Activated T-helper 2 cell treated with anti-CD3 and anti-CD28 coated beads, Interferon-gamma antibody, Interleukin-2, Interleukin-4, amounts not matched to agents 10 μg/mL and 5 μg/mL and 100 μg/mL, durations not matched to agents 14 hours and 24 hours and 36 hours (primary cell): ENCODE measurements at regions of chr3 and their contacts with region 1.

Region 1: GRCh38 chr3:71064288-71064955 is 519.1 kb downstream of the FOXP1 start:
- DNase-seq: peak; percentile 68
- H3K4me3 Mint-ChIP-seq: no peak overlapping the region
- H3K27ac Mint-ChIP-seq: no peak overlapping the region
- H3K4me1 Mint-ChIP-seq: peaks cover 58% of the 10 kb centered on the region
- H3K27me3 Mint-ChIP-seq: no peaks in the 10 kb centered on the region

Region 2: GRCh38 chr3:71006810-71007785 is 57.3 kb before region 1 on chr3:
- intact Hi-C with region 1: loop called (anchors 1 kb)
- DNase-seq: no peak
- H3K4me3 Mint-ChIP-seq: no peak overlapping the region
- H3K27ac Mint-ChIP-seq: no peak overlapping the region
- H3K4me1 Mint-ChIP-seq: peaks cover 59% of the 10 kb centered on the region
- H3K27me3 Mint-ChIP-seq: no peaks in the 10 kb centered on the region

Region 3: GRCh38 chr3:71168880-71169411 is 104.5 kb after region 1 on chr3:
- intact Hi-C with region 1: no loop called
- DNase-seq: no peak
- H3K4me3 Mint-ChIP-seq: no peak overlapping the region
- H3K27ac Mint-ChIP-seq: no peak overlapping the region
- H3K4me1 Mint-ChIP-seq: peaks cover 3% of the 10 kb centered on the region
- H3K27me3 Mint-ChIP-seq: no peaks in the 10 kb centered on the region

Region 4: DNA sequence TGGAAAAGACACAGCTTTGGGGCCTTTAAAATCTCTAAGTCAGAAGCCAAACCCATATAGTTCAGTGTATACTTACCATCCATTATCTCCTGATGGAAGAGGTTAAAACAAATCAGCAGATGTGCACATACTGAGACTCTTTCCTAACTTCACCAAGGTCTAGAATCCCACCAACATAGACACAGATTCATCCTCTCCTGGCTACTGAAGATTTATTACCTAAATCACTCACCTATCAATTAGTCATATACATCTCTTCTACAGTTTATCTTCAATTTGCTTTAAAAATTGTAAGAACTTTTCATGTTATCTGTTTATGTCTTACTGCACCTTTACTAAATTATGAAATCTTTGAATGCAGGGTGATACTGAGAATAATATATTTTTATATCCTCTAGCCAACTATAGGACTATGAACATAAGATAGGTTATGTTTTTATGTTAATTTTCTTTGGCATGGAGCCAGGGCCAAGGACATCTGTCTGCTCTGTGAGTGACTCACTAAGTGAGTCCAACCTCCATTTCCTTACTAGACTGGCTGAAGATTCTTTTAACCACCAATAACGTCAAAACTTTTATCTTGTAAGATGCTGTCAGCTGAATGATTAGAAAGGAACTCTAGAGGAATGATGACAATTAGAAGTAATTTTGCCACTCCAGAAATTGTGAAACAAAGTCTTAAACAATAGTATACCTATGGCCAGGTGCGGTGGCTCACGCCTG is 121.5 kb after region 1 on chr3:
- intact Hi-C with region 1: loop called (anchors 5 kb)
- DNase-seq: no peak
- H3K4me3 Mint-ChIP-seq: no peak overlapping the region
- H3K27ac Mint-ChIP-seq: peak overlapping the region; percentile 35
- H3K4me1 Mint-ChIP-seq: peaks cover 48% of the 10 kb centered on the region
- H3K27me3 Mint-ChIP-seq: no peaks in the 10 kb centered on the region

Region 5: GRCh38 chr3:71325715-71326114 is 261.3 kb after region 1 on chr3:
- intact Hi-C with region 1: no loop called
- DNase-seq: no peak
- H3K4me3 Mint-ChIP-seq: no peak overlapping the region
- H3K27ac Mint-ChIP-seq: no peak overlapping the region
- H3K4me1 Mint-ChIP-seq: no peaks in the 10 kb centered on the region
- H3K27me3 Mint-ChIP-seq: no peaks in the 10 kb centered on the region

Region 6: DNA sequence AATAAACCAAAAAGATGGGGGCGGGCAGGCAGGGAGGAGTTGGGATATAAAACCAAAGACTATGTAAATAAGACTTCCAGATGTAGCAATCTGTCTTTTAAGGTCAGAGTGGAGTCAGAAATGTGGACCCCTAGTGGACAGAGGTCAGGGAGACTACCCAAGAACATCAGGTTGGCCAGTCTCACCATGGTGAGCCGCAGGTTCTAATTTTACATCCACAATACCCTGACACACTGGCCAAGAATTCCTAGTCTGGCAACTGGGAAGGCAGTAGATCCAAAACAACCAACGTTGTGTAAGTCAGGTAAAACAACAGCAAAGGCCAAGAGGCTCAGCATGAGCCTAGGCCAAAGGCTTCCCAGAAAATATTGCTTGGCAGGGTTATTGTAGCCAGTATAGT is 315.7 kb after region 1 on chr3:
- intact Hi-C with region 1: loop called (anchors 5 kb)
- DNase-seq: no peak
- H3K4me3 Mint-ChIP-seq: no peak overlapping the region
- H3K27ac Mint-ChIP-seq: peak overlapping the region; percentile 68
- H3K4me1 Mint-ChIP-seq: peaks cover 56% of the 10 kb centered on the region
- H3K27me3 Mint-ChIP-seq: no peaks in the 10 kb centered on the region

Region 7: DNA sequence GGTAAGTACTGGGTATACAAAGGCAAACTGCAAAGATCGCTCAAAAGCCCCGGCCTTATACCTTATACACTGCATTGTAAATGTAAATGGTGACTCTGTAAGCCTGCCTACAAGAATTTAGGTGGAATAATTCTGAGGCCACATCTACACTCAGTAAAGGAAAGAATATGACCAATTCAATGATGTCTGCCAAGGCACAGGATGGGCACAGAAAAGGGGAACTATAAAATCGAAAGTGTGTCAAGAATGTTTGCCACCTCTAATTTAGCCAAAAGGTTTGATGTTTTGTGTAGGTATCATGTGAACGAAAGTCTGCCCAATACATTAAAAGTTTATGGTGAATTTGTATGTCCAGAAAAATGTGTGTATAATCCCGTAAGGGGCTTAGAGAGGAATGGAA is 423.0 kb after region 1 on chr3:
- intact Hi-C with region 1: loop called (anchors 5 kb)
- DNase-seq: no peak
- H3K4me3 Mint-ChIP-seq: peak overlapping the region; percentile 71
- H3K27ac Mint-ChIP-seq: peak overlapping the region; percentile 91
- H3K4me1 Mint-ChIP-seq: peaks cover 71% of the 10 kb centered on the region
- H3K27me3 Mint-ChIP-seq: no peaks in the 10 kb centered on the region